Activated CD4-positive, alpha-beta T cell treated with anti-CD3 and anti-CD28 coated beads for 36 hours (primary cell): ENCODE measurements at regions of chr6 and their contacts with region 1.

Region 1: GRCh38 chr6:593139-593906 is 63.6 kb downstream of the HUS1B start:
- DNase-seq: peak; percentile 80
- ATAC-seq: peak; percentile 63
- H3K4me3 Mint-ChIP-seq: no peak overlapping the region
- H3K27ac Mint-ChIP-seq: peak overlapping the region; percentile 74
- H3K4me1 Mint-ChIP-seq: peaks cover 9% of the 10 kb centered on the region
- H3K27me3 Mint-ChIP-seq: no peaks in the 10 kb centered on the region

Region 2: DNA sequence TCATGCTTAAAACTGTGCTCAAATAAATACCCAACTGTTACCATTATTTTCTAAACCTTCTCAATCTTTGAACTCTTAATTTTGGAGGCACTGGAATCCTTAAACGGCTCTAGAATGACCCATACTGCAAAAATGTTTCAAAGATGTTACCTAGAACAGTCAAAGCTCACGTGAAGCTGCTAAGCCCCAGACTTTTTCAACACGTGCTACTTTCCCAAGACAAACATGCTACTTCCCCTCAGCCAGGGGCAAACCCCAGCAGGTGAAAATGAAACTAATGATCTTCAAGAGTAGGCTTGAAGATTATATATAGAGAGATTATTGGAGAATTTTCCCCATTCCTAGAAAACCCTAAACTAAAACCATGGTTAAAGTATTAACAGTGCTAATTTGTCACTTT is 35.4 kb after region 1 on chr6:
- CTCF ChIA-PET with region 1: interaction called, 15 read pairs
- POLR2A ChIA-PET with region 1: no interaction called
- intact Hi-C with region 1: no loop called
- DNase-seq: no peak
- ATAC-seq: no peak
- H3K4me3 Mint-ChIP-seq: no peak overlapping the region
- H3K27ac Mint-ChIP-seq: no peak overlapping the region
- H3K4me1 Mint-ChIP-seq: peaks cover 21% of the 10 kb centered on the region
- H3K27me3 Mint-ChIP-seq: no peaks in the 10 kb centered on the region

Region 3: DNA sequence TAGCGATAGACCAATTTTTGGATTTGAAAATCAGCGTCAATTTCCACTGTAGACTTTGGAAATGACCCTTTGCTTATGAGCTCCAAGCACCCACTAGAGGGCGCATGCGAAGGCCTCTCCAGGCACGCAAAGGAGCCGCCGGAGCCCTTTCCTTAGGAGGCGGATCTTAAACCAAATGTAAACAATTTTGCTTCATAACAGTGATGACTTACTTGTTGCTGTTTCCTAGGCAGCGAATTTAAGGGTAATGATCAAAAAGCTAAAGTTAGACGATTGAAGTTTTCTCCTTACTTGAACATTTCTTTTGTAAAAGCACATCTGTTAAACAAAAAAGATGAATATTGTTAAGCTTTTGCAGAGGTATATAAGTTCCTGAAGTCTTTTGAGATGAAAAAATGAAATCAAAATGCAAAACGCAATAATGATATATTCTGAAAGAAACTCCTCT is 128.8 kb after region 1 on chr6:
- CTCF ChIA-PET with region 1: interaction called, 27 read pairs
- POLR2A ChIA-PET with region 1: no interaction called
- intact Hi-C with region 1: loop called (anchors 1 to 2 kb)
- DNase-seq: peak; percentile 90
- ATAC-seq: peak; percentile 93
- H3K4me3 Mint-ChIP-seq: no peak overlapping the region
- H3K27ac Mint-ChIP-seq: no peak overlapping the region
- H3K4me1 Mint-ChIP-seq: no peaks in the 10 kb centered on the region
- H3K27me3 Mint-ChIP-seq: peaks cover 18% of the 10 kb centered on the region

Region 4: GRCh38 chr6:797479-798077 is 204.3 kb after region 1 on chr6:
- CTCF ChIA-PET with region 1: interaction called, 11 read pairs
- POLR2A ChIA-PET with region 1: no interaction called
- intact Hi-C with region 1: no loop called
- DNase-seq: peak; percentile 68
- ATAC-seq: no peak
- H3K4me3 Mint-ChIP-seq: no peak overlapping the region
- H3K27ac Mint-ChIP-seq: no peak overlapping the region
- H3K4me1 Mint-ChIP-seq: no peaks in the 10 kb centered on the region
- H3K27me3 Mint-ChIP-seq: peaks cover 46% of the 10 kb centered on the region

Region 5: GRCh38 chr6:1047981-1048541 is 454.7 kb after region 1 on chr6:
- CTCF ChIA-PET with region 1: no interaction called
- POLR2A ChIA-PET with region 1: no interaction called
- intact Hi-C with region 1: no loop called
- DNase-seq: no peak
- ATAC-seq: no peak
- H3K4me3 Mint-ChIP-seq: no peak overlapping the region
- H3K27ac Mint-ChIP-seq: no peak overlapping the region
- H3K4me1 Mint-ChIP-seq: no peaks in the 10 kb centered on the region
- H3K27me3 Mint-ChIP-seq: peaks cover 40% of the 10 kb centered on the region

Region 6: GRCh38 chr6:1263039-1263849 is 669.9 kb after region 1 on chr6:
- CTCF ChIA-PET with region 1: no interaction called
- POLR2A ChIA-PET with region 1: no interaction called
- intact Hi-C with region 1: no loop called
- DNase-seq: no peak
- ATAC-seq: no peak
- H3K4me3 Mint-ChIP-seq: no peak overlapping the region
- H3K27ac Mint-ChIP-seq: no peak overlapping the region
- H3K4me1 Mint-ChIP-seq: no peaks in the 10 kb centered on the region
- H3K27me3 Mint-ChIP-seq: peaks cover 14% of the 10 kb centered on the region

Region 7: DNA sequence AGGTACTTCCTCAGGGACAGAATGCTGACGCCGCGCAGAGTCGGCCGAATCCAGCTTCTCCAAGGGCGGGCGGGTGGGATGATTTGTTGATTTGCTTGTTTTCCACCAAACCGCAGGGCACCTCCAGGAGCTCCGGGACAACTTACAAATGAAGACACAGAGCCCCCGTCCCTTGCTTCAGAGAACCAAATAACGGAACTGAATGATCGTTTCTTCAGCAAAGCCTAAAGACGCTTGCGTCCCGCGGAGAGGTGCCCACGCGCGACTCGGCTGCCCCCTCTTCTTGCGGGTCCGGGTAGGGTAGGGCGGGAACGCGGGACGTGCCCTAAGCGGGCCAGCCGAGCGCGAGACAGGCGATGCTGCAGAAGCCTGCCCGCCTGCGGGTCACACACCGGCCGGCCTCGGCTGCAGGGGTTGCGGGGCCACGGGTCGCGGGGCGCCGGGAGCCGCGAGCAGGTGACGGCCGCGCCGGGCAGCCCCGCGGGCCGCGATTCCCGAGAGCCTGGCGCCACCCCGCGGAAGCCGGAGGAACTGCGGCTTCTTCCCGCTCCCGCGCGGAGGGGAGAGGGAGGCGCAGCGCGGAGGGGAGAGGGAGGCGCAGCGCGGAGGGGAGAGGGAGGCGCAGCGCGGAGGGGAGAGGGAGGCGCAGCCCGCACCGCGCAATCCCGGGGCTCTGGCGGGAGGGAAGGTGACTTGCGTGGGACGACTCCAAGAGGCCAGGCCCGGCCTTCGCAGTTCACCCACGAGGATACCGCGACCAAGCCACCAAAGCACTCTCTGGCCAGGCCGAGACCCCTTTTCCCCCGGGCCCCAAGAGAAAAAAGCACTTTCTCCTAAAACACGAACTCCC is 788.4 kb after region 1 on chr6:
- CTCF ChIA-PET with region 1: interaction called, 6 read pairs
- POLR2A ChIA-PET with region 1: no interaction called
- intact Hi-C with region 1: loop called (anchors 1 to 5 kb)
- DNase-seq: peak; percentile 77
- ATAC-seq: peak; percentile 75
- H3K4me3 Mint-ChIP-seq: peak overlapping the region; percentile 10
- H3K27ac Mint-ChIP-seq: no peak overlapping the region
- H3K4me1 Mint-ChIP-seq: peaks cover 38% of the 10 kb centered on the region
- H3K27me3 Mint-ChIP-seq: peaks cover 68% of the 10 kb centered on the region

Region 8: DNA sequence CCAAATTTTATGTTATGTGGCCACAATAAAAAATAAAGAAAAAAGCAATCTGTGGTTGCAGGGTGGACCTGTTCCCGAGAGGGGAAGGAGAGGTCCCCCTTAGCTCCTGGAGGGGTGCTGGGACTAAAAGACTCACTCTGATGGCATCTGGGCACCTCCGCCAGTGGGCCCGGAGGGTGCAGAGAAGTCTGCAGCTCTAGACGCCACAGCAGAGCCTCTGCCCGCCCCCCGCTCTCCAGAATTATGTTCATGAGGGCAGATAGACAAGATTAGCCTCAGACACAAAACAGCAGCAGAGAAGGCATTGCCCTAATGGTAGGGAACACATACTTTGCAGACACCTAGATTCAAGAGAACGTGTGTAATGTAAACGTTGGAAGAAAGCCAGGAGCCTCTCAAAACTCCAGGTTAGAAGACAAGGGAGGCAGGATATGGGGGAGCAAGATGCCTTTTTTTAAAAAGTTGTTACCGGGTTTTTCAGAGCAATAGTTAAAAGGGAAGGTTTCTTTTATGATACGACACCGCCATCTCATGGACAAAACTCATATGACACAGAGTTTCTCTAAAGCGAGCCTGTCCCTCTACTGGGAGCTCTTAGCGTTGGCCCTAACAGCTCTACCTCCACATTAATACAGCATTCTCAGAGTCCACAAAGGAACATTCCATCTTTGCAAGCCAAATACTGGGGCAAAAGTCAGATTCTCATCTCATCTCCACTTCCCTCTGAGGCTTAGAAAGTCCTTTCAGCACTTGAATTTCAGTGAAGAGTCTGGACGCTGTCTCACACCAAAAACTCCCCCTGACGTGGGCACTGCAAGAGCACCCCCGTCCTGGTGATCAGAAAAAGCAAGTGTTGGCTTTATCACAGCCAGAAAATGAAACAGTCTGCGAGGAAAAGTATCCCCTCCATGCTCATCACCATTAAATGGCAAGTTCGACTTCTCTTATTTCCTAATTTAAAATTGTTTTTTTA is 843.3 kb after region 1 on chr6:
- CTCF ChIA-PET with region 1: interaction called, 11 read pairs
- POLR2A ChIA-PET with region 1: no interaction called
- intact Hi-C with region 1: loop called in 1 of 2 experiments (anchors 5 kb)
- DNase-seq: peak; percentile 61
- ATAC-seq: peak; percentile 78
- H3K4me3 Mint-ChIP-seq: no peak overlapping the region
- H3K27ac Mint-ChIP-seq: no peak overlapping the region
- H3K4me1 Mint-ChIP-seq: peaks cover 4% of the 10 kb centered on the region
- H3K27me3 Mint-ChIP-seq: peaks cover 34% of the 10 kb centered on the region